T-cell (primary cell): ENCODE measurements at regions of chr19 and their contacts with region 1.

Region 1: GRCh38 chr19:38831142-38831605 is 420 bp downstream of the ECH1 start:
- DNase-seq: no peak
- ATAC-seq: peak in 3 of 4 experiments; percentile 10 to 18 (median 13)
- H3K4me3 ChIP-seq: peak overlapping the region; percentile 62 to 97
- H3K4me3 Mint-ChIP-seq: peak overlapping the region; percentile 85 to 91 (median 87)
- H3K27ac ChIP-seq: peak overlapping the region; percentile 57
- H3K27ac Mint-ChIP-seq: peak overlapping the region; percentile 91 to 95
- H3K4me1 ChIP-seq: peaks cover 5 to 29% of the 10 kb centered on the region in 2 experiments
- H3K4me1 Mint-ChIP-seq: peaks cover 42 to 45% (median 43%) of the 10 kb centered on the region in 3 donors
- H3K27me3 ChIP-seq: no peaks in the 10 kb centered on the region
- H3K27me3 Mint-ChIP-seq: no peaks in the 10 kb centered on the region

Region 2: DNA sequence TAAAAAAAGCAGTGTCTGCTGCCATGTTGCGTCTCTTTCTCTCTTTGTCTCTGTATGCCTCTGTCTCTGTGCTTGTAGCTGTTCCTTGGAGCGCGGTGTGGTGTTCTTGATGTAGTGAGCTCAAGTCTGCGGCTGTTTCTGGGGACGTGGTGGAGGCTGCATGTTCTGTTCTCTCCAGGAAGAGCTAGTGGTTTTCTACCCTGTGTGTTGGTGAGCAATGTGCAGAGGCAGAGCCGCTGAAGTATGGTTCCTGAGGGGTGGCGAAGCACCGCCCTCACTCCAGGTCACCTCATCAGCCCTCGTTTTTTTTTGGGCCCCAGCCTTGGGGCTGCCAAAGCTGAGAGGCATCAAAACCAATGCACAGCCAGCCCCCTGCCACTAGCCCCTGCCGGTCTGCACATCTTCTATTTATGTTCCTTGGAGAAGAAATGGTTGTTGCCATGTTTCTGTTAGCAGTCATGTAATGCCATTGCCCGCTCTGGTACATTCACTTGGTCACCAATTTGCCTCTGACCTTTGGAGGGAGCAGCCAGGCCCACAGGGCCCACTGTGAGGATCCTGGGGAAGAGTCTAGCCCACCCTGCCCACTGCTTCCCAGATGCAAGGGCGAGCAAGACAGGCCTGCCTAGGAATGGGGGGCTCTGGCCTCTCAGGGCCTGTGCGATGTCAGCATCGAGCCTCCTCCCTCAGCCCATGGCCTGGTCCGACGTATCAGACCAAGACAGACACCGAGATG is 11.4 kb after region 1 on chr19:
- CTCF ChIA-PET with region 1: interaction called in 1 of 2 experiments, 15 read pairs
- POLR2A ChIA-PET with region 1: interaction called, 5 to 10 read pairs
- DNase-seq: peak; percentile 21 to 84 (median 64)
- ATAC-seq: peak; percentile 81 to 91 (median 86)
- H3K4me3 ChIP-seq: peak overlapping the region; percentile 18 to 38
- H3K4me3 Mint-ChIP-seq: peak overlapping the region; percentile 75 to 97 (median 81)
- H3K27ac ChIP-seq: peak overlapping the region; percentile 64
- H3K27ac Mint-ChIP-seq: peak overlapping the region; percentile 84 to 92
- H3K4me1 ChIP-seq: peaks cover 36 to 87% of the 10 kb centered on the region in 2 experiments
- H3K4me1 Mint-ChIP-seq: peaks cover 70 to 84% (median 83%) of the 10 kb centered on the region in 3 donors
- H3K27me3 ChIP-seq: no peaks in the 10 kb centered on the region
- H3K27me3 Mint-ChIP-seq: no peaks in the 10 kb centered on the region

Region 3: GRCh38 chr19:38849860-38850435 is 18.8 kb after region 1 on chr19 and contains the start of gene HNRNPL:
- CTCF ChIA-PET with region 1: interaction called in 1 of 2 experiments, 10 read pairs
- POLR2A ChIA-PET with region 1: interaction called, 3 to 13 read pairs
- DNase-seq: peak in 31 of 35 experiments; percentile 98 to 100 (median 99)
- ATAC-seq: peak; percentile 70 to 72 (median 72)
- H3K4me3 ChIP-seq: peak within 1 kb of the TSS; percentile 74 to 77
- H3K4me3 Mint-ChIP-seq: peak within 1 kb of the TSS; percentile 90 to 97 (median 94)
- H3K27ac ChIP-seq: peak within 1 kb of the TSS; percentile 96
- H3K27ac Mint-ChIP-seq: peak within 1 kb of the TSS; percentile 97 to 98
- H3K4me1 ChIP-seq: peaks cover 20 to 65% of the 10 kb centered on the region in 2 experiments
- H3K4me1 Mint-ChIP-seq: peaks cover 57 to 62% (median 58%) of the 10 kb centered on the region in 3 donors
- H3K27me3 ChIP-seq: no peaks in the 10 kb centered on the region
- H3K27me3 Mint-ChIP-seq: no peaks in the 10 kb centered on the region
- total RNA-seq, gene HNRNPL: 320 to 498 (median 330) TPM

Region 4: DNA sequence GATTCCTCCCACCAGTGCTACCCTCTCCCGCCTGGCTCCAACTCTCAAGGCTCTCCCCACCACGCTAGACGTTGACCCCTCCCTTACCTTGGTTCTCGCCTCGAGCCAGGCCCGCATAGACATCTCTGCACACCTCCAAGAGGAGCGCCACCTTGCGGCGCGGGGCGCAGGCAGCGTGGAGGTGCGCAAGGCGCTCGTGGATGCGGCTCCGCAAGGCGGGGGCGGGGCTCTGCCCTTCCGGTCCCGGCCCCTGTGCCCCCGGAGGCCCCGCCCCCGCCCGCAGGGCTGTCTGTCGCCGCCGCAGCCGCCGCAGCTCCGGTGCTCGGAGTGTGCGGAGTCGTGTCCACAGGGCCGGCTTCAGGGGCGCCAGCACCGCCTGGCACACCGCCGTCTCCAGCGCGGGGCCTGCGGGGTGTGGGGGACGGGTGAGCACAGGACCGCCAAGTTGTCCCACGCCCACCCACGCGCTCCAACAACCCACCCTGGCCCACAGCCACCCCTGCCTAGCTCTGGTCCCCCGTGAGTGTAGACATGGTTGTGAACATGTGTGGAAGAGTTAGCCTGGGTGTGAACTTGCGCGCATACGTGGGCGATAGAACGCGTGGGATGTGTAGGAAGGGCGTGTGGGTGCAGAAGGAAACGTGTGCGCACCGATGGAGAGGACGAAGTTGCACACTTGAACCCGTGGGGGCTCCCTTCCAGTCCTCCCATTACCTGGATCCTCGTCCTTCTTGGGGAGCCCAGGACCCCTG is 38.9 kb after region 1 on chr19:
- CTCF ChIA-PET with region 1: interaction called in 1 of 2 experiments, 3 read pairs
- POLR2A ChIA-PET with region 1: interaction called, 3 to 11 read pairs
- DNase-seq: peak; percentile 81 to 98 (median 90)
- ATAC-seq: peak; percentile 93 to 98 (median 96)
- H3K4me3 ChIP-seq: peak overlapping the region; percentile 61 to 72
- H3K4me3 Mint-ChIP-seq: peak overlapping the region; percentile 83 to 90 (median 83)
- H3K27ac ChIP-seq: peak overlapping the region; percentile 69
- H3K27ac Mint-ChIP-seq: peak overlapping the region; percentile 90 to 92
- H3K4me1 ChIP-seq: peaks cover 12 to 52% of the 10 kb centered on the region in 2 experiments
- H3K4me1 Mint-ChIP-seq: peaks cover 44 to 49% (median 46%) of the 10 kb centered on the region in 3 donors
- H3K27me3 ChIP-seq: no peaks in the 10 kb centered on the region
- H3K27me3 Mint-ChIP-seq: no peaks in the 10 kb centered on the region